ENCODE measurements at regions of chr17 and their contacts with region 1.

Region 1: DNA sequence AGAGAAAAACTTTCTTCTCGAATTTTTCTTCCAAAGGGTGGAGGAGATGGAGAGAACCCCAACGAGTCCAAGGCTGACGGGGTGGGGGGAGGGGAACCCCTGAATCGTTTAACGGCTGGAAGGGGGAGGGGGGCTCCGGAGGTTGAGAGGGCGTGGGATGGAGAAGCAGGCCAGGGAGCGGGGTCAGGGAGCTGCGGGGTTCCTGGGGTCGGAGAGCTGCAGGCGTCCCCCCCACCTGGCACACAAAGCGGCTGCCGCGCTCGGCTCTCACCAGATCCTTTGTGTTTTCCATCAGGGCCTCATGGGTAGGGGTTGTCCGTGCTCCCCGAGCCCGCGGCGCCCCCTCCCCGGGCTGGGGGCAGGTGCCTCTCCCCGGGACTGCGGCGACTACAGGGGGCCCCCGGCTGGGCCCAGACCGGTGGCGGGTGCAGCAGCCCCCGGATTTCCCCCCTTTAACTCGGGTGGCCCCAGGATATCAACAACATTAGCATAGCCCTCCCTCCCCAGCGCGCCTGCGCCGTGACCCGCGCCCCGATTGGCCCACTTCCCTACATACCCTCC is at the start of gene MBTD1:
- DNase-seq: peak; percentile 97
- H3K4me3 Mint-ChIP-seq: peak within 1 kb of the TSS; percentile 87
- H3K27ac Mint-ChIP-seq: peak within 1 kb of the TSS; percentile 98
- H3K4me1 Mint-ChIP-seq: peaks cover 65% of the 10 kb centered on the region
- H3K27me3 Mint-ChIP-seq: no peaks in the 10 kb centered on the region
- CTCF ChIP-seq: no peak
- total RNA-seq, gene MBTD1: 35.6 and 38.4 TPM in 2 replicates

Region 2: DNA sequence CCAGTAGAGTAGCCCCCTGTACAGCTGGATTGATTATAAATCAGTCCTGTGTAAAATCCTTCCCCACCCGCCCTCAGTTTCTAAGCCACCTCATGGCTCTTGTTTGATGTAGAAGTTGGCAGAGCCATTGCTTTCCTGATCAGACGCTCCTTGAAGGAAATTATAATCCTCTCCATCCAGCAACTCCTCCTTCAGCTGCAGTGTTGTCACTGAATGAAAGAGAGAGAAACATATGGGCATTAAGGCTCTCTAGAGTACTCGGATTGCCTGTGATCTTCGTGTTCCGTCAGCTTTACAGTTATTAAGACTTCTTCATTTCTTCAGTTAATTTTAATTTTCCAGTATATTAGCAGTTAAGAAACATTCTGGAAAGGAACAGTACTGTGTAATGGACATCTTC is 79.2 kb before region 1 on chr17:
- CTCF ChIA-PET with region 1: no interaction called
- intact Hi-C with region 1: loop called (anchors 5 kb)
- DNase-seq: no peak
- H3K4me3 Mint-ChIP-seq: no peak overlapping the region
- H3K27ac Mint-ChIP-seq: no peak overlapping the region
- H3K4me1 Mint-ChIP-seq: no peaks in the 10 kb centered on the region
- H3K27me3 Mint-ChIP-seq: no peaks in the 10 kb centered on the region
- CTCF ChIP-seq: no peak

Region 3: GRCh38 chr17:51231999-51232398 is 27.6 kb before region 1 on chr17:
- CTCF ChIA-PET with region 1: interaction called, 5 read pairs
- intact Hi-C with region 1: loop called (anchors 2 kb)
- DNase-seq: peak; percentile 58
- H3K4me3 Mint-ChIP-seq: peak overlapping the region; percentile 61
- H3K27ac Mint-ChIP-seq: peak overlapping the region; percentile 22
- H3K4me1 Mint-ChIP-seq: peaks cover 38% of the 10 kb centered on the region
- H3K27me3 Mint-ChIP-seq: no peaks in the 10 kb centered on the region
- CTCF ChIP-seq: no peak

Region 4: GRCh38 chr17:51335883-51336822 is 76.5 kb after region 1 on chr17:
- CTCF ChIA-PET with region 1: no interaction called
- intact Hi-C with region 1: no loop called
- DNase-seq: no peak
- H3K4me3 Mint-ChIP-seq: no peak overlapping the region
- H3K27ac Mint-ChIP-seq: no peak overlapping the region
- H3K4me1 Mint-ChIP-seq: no peaks in the 10 kb centered on the region
- H3K27me3 Mint-ChIP-seq: peaks cover 70% of the 10 kb centered on the region
- CTCF ChIP-seq: no peak